PC-3 (cell line): ENCODE measurements at regions of chr18 and their contacts with region 1.

Region 1: DNA sequence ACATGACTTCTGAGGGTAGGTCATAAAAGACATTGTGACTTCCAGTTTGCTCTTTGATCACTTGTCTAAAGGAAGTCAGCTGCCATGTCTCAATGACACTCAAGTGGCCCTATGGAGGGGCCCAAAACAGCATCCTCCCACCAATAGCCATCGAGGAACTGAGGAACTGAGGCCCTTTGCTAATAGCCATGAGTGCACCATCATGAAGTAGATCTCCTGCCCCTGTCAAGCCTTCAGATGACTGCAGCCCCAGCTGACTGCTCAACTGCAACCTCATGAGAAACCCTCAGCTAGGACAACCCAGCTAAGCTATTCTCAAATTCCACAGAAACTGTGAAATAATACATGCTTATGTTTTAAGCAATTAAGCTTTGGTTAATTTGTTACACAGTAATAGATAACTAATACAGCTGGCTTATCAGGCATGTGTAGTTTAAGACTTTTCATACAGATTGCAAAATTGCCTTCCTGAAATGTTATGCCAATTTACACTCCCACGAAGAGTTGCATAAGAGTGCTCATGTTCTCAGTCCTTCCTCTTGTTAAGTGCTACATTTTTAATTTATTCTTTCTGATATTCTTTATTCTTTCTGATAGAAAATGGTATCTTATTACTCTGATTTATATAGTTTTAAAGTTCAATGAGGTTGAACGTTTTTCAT is 105.6 kb upstream of the NDUFV2 start:
- DNase-seq: no peak
- ATAC-seq: no peak
- H3K4me3 ChIP-seq: no peak overlapping the region
- H3K27ac ChIP-seq: 0 out of 2 replicates have a peak overlapping the region, but pooled peaks have one; percentile 2
- H3K4me1 ChIP-seq: peaks cover 20% of the 10 kb centered on the region
- H3K27me3 ChIP-seq: no peaks in the 10 kb centered on the region
- CTCF ChIP-seq: no peak

Region 2: DNA sequence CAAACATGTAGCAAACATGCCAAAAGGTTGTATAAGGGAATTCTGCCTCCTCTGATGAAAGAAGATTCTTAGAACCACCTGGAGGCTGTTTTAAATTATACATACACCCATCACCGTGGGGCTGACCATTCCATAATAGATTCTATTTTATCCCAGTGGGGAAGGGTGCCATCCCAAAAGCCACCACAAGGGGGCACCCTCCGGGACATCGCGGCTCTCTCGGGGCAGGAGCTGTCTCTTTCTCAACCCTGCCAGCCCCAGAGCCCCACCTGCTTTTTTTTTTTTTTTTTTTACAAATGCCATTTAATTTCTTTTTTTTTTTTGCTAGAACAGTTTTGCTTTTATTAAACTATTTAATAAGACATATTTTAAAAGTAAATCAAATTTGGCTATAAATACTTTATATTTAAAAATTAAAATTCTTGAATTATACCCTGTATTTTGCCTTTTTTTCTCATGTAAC is 300.1 kb before region 1 on chr18:
- CTCF ChIA-PET with region 1: interaction called, 21 read pairs
- POLR2A ChIA-PET with region 1: no interaction called
- intact Hi-C with region 1: no loop called
- DNase-seq: peak; percentile 81
- ATAC-seq: peak; percentile 86
- H3K4me3 ChIP-seq: no peak overlapping the region
- H3K27ac ChIP-seq: no peak overlapping the region
- H3K4me1 ChIP-seq: peaks cover 10% of the 10 kb centered on the region
- H3K27me3 ChIP-seq: no peaks in the 10 kb centered on the region
- CTCF ChIP-seq: peak; percentile 88

Region 3: GRCh38 chr18:8972116-8972515 is 24.8 kb before region 1 on chr18:
- CTCF ChIA-PET with region 1: no interaction called
- POLR2A ChIA-PET with region 1: no interaction called
- intact Hi-C with region 1: no loop called
- DNase-seq: no peak
- ATAC-seq: no peak
- H3K4me3 ChIP-seq: no peak overlapping the region
- H3K27ac ChIP-seq: no peak overlapping the region
- H3K4me1 ChIP-seq: peaks cover 17% of the 10 kb centered on the region
- H3K27me3 ChIP-seq: no peaks in the 10 kb centered on the region
- CTCF ChIP-seq: no peak

Region 4: GRCh38 chr18:9017170-9017904 is 20.4 kb after region 1 on chr18:
- CTCF ChIA-PET with region 1: interaction called, 3 read pairs
- POLR2A ChIA-PET with region 1: no interaction called
- intact Hi-C with region 1: loop called (anchors 2 kb)
- DNase-seq: peak; percentile 97
- ATAC-seq: peak; percentile 92
- H3K4me3 ChIP-seq: peak overlapping the region; percentile 61
- H3K27ac ChIP-seq: peak overlapping the region; percentile 98
- H3K4me1 ChIP-seq: peaks cover 25% of the 10 kb centered on the region
- H3K27me3 ChIP-seq: no peaks in the 10 kb centered on the region
- CTCF ChIP-seq: no peak